ENCODE measurements at regions of chr9 and their contacts with region 1.

Region 1: GRCh38 chr9:73116031-73116430 is 35.6 kb upstream of the ANXA1 start:
- DNase-seq: no peak
- H3K4me3 Mint-ChIP-seq: no peak overlapping the region
- H3K27ac Mint-ChIP-seq: no peak overlapping the region
- H3K4me1 Mint-ChIP-seq: peaks cover 31% of the 10 kb centered on the region
- H3K27me3 Mint-ChIP-seq: no peaks in the 10 kb centered on the region

Region 2: DNA sequence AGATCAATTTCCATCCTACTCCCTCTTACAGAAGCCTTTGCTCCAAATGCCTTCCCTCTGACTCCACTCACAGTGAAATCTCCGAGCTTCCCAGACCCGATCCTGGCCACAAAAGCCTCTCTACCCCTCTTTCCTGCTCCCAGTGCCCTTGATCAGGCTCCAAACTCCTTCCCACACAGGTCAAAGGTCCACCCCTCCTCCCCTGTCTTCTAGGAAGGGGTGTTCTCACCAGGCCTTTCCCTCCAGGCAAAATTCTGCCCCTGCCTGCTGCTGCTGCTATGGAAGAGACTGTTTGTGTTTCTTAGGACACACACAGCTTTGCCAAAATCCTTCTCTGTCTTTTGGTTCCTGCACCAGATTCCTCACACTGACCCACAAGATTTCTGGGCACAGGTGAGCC is 77.4 kb before region 1 on chr9:
- CTCF ChIA-PET with region 1: no interaction called
- POLR2A ChIA-PET with region 1: no interaction called
- DNase-seq: no peak
- H3K4me3 Mint-ChIP-seq: no peak overlapping the region
- H3K27ac Mint-ChIP-seq: no peak overlapping the region
- H3K4me1 Mint-ChIP-seq: no peaks in the 10 kb centered on the region
- H3K27me3 Mint-ChIP-seq: peaks cover 25% of the 10 kb centered on the region

Region 3: DNA sequence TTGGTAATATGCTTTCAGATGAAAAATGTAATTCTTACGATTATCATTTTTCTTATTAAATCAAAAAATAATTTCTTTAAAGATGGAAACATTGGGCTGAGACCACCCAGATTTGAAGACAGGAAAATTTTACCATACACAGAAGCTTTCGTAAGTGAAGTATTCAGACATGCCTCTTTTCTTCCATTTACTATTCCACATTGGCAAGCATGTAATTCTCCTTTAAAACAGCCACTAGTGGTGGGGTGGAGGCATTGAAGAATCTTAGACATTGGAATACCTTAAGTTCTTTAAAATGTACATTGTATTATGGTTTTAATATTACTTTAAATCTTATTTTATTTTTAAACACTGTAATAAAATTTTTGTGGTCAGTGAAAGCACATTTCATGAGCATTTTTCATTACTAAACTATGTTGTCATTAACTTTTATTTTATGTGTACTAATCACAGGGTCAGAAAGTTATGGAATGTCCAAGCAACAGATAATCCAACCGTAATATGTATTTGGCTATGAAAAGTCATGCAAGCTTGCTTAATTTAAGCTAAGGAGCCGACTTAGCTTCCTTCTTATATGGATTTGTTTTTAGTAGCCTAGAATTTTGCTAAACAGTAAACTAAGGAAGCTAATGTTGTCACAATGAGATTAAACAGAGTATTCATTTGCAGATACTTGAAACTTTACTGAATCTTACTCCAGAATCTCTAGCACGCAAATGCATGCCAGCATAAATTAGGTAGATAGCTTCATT is 65.8 kb before region 1 on chr9:
- CTCF ChIA-PET with region 1: no interaction called
- POLR2A ChIA-PET with region 1: no interaction called
- DNase-seq: no peak
- H3K4me3 Mint-ChIP-seq: no peak overlapping the region
- H3K27ac Mint-ChIP-seq: no peak overlapping the region
- H3K4me1 Mint-ChIP-seq: no peaks in the 10 kb centered on the region
- H3K27me3 Mint-ChIP-seq: peaks cover 13% of the 10 kb centered on the region

Region 4: GRCh38 chr9:73061146-73061545 is 54.9 kb before region 1 on chr9:
- CTCF ChIA-PET with region 1: no interaction called
- POLR2A ChIA-PET with region 1: no interaction called
- DNase-seq: no peak
- H3K4me3 Mint-ChIP-seq: no peak overlapping the region
- H3K27ac Mint-ChIP-seq: no peak overlapping the region
- H3K4me1 Mint-ChIP-seq: no peaks in the 10 kb centered on the region
- H3K27me3 Mint-ChIP-seq: peaks cover 4% of the 10 kb centered on the region

Region 5: DNA sequence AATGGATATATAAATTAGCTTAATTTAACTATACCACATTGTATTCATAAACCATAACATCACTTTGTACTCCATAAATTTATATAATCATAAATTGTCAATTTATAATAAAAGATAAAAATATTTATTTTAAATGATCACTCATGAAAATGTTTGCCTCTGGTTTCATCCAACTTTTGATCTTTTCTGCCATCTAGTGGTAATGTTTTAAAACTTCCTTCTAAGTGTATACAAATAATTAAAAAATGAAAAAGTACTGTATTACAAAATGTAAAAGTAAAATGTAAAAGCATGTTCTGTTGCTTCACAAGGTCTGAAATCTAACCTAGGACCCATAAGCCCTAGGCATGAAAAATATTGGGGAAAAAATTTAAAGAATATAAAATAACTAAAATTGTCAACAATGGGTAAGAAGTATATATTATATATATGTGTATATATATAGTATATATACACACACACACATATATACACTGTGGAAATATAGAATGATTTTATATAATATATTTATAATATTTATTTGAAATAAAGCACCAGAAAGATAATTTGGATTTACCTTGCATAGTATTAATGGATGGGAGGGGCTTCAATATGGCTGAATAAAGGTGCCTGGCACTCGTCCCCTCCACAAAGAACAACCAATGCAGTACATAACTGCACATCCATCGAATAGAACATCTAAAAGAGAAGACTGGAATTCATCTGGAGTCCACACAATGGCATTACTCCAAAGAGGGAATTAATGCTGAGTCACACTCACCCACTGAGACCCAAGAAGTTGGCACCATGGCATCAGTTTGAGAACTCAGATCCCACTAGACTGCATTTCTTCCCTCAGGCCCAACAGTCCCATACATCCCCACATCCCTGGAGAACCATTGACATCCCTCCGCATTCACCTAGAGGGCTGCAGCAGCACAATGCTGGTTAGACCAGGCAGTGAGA is 68.2 kb after region 1 on chr9:
- CTCF ChIA-PET with region 1: interaction called, 78 read pairs
- POLR2A ChIA-PET with region 1: no interaction called
- DNase-seq: no peak
- H3K4me3 Mint-ChIP-seq: no peak overlapping the region
- H3K27ac Mint-ChIP-seq: no peak overlapping the region
- H3K4me1 Mint-ChIP-seq: no peaks in the 10 kb centered on the region
- H3K27me3 Mint-ChIP-seq: peaks cover 11% of the 10 kb centered on the region